Esophagus muscularis mucosa (tissue), 4 donors: ENCODE measurements at regions of chr10 and their contacts with region 1.

Region 1: DNA sequence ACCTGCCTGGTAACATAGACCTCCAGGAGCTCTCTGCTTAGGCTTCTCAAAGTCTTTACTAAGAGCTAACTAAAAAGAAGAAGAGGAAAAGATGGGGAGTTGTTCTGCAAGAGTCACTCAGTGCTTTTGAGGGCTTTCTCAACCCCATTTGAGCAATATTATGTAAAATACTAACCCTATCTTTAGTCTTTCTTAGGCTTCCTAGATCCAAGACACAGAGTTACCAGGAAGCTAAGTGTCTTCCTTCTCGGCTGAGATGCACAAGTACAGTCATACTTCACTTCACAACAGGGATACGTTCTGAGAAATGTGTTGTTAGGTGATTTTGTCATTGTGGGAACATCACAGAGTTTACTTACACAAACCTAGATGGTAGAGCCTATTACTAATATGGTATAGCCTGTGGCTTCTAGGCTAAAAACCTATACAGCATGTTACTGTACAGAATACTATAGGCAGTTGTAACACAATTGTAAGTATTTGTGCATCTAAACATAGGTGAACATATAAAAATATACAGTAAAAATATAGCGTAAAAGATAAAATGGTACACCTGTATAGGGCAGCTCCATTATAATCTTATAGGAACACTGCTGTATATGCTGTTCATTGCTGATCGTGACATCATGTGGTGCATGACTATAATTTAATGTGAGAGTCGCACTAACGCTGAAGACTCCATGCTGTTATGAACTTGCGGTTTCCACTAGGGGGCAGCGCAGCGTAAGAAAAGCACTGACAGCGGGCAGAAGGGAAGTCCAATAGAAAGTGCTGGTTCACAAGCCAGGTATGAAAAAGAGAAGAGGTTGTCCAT is 16.3 kb downstream of the ANKRD22 start:
- DNase-seq: no peak
- H3K4me3 ChIP-seq: no peak overlapping the region
- H3K27ac ChIP-seq: no peak overlapping the region
- H3K4me1 ChIP-seq: peaks cover 0 to 9% (median 3%) of the 10 kb centered on the region in 4 donors
- H3K27me3 ChIP-seq: no peaks in the 10 kb centered on the region
- CTCF ChIP-seq: peak; percentile 84 to 89 (median 85)
- EP300 ChIP-seq: no peak
- POLR2A ChIP-seq: no peak

Region 2: GRCh38 chr10:88880282-88881076 is 45.2 kb after region 1 on chr10:
- intact Hi-C with region 1: loop called (anchors 5 kb)
- DNase-seq: peak; percentile 95
- H3K4me3 ChIP-seq: peak overlapping the region; percentile 71 to 84 (median 76)
- H3K27ac ChIP-seq: peak overlapping the region; percentile 85 to 89 (median 88)
- H3K4me1 ChIP-seq: peaks cover 7 to 51% (median 46%) of the 10 kb centered on the region in 4 donors
- H3K27me3 ChIP-seq: no peaks in the 10 kb centered on the region
- CTCF ChIP-seq: peak in 2 of 3 experiments; percentile 9 to 24
- EP300 ChIP-seq: no peak
- POLR2A ChIP-seq: peak; percentile 36

Region 3: GRCh38 chr10:88990384-88991160 is 155.3 kb after region 1 on chr10 and contains the start of gene FAS:
- intact Hi-C with region 1: loop called (anchors 2 kb)
- DNase-seq: peak; percentile 94
- H3K4me3 ChIP-seq: peak within 1 kb of the TSS; percentile 87 to 99 (median 90)
- H3K27ac ChIP-seq: peak within 1 kb of the TSS; percentile 93 to 98 (median 97)
- H3K4me1 ChIP-seq: peaks cover 8 to 77% (median 72%) of the 10 kb centered on the region in 4 donors
- H3K27me3 ChIP-seq: no peaks in the 10 kb centered on the region
- CTCF ChIP-seq: no peak
- EP300 ChIP-seq: no peak
- POLR2A ChIP-seq: peak; percentile 23
- total RNA-seq, gene FAS: 16.6 to 27.5 (median 18.7) TPM

Region 4: GRCh38 chr10:89224739-89225443 is 389.6 kb after region 1 on chr10:
- intact Hi-C with region 1: loop called (anchors 5 kb)
- DNase-seq: peak; percentile 57
- H3K4me3 ChIP-seq: peak overlapping the region in 2 of 4 donors; percentile 0 to 6
- H3K27ac ChIP-seq: peak overlapping the region; percentile 31 to 49 (median 46)
- H3K4me1 ChIP-seq: no peaks in the 10 kb centered on the region
- H3K27me3 ChIP-seq: no peaks in the 10 kb centered on the region
- CTCF ChIP-seq: peak in 1 of 3 experiments; percentile 31
- EP300 ChIP-seq: no peak
- POLR2A ChIP-seq: no peak

Region 5: DNA sequence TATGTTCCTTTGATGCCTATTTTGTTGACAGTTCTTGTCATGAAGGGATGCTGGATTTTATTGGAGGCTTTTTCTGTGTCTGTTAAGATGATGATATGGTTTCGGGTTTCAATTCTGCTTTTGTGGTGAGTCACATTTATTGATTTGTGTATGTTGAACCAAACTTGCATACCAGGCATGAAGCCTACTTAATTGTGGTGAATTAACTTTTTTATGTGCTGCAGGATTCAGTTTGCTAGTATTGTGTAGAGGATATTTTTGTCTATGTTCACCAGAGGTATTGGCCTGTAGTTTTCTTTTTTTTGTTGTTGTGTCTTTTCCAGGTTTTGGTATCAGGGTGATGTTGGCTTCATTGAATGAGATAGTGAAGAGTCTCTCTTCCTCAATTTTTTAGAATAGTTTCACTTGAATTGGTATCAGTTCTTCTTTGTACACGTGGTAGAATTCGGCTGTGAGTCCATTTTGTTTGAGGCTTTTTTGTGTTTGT is 1212.0 kb after region 1 on chr10:
- intact Hi-C with region 1: no loop called
- DNase-seq: no peak
- H3K4me3 ChIP-seq: no peak overlapping the region
- H3K27ac ChIP-seq: no peak overlapping the region
- H3K4me1 ChIP-seq: no peaks in the 10 kb centered on the region
- H3K27me3 ChIP-seq: no peaks in the 10 kb centered on the region
- CTCF ChIP-seq: no peak
- EP300 ChIP-seq: no peak
- POLR2A ChIP-seq: no peak